ENCODE measurements at regions of chr10 and their contacts with region 1.

Region 1: DNA sequence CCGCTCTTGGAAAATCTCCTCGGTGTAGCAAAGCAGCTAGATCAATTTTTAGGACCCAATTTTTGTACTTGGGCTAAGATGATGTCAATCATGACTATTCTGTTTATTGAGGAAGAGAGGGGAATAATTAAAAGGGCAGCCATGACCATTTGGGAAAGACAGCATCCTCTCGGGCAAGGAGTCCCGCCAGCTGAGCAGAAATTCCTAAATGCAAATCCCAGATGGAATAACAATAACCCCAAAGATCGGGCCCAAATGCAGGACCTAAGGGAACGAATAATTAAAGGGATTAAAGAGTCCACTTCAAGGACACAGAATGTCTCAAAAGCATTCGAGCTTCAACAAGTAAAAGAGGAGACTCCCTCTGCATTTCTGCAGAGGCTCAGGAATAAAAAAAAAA is 18.7 kb downstream of the COL17A1 start:
- DNase-seq: no peak
- H3K4me3 ChIP-seq: no peak overlapping the region
- H3K27ac ChIP-seq: no peak overlapping the region
- H3K4me1 ChIP-seq: no peaks in the 10 kb centered on the region
- H3K27me3 ChIP-seq: no peaks in the 10 kb centered on the region
- CTCF ChIP-seq: no peak

Region 2: DNA sequence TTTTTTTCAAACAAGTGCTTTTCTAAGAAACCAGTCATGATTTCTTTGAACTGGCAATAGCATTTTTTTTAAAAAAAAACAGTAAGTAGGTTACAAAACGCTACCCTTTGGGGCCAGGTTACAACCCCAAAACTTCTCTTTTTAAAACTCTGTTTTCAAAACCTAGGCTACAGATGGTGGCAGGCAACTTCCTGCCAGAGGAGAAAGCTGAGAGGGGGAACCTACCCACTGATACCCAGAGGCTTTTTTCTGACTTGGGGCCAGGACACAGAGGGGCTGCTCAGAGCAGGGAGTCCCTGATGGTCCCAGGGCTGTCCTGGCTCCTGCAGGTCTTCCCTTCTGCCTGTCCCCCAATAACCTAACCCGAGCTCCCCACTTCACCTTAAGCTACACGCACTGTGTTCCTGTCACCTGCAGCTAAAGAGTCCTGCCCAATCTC is 155.9 kb before region 1 on chr10:
- CTCF ChIA-PET with region 1: interaction called, 16 read pairs
- POLR2A ChIA-PET with region 1: no interaction called
- intact Hi-C with region 1: no loop called
- DNase-seq: no peak
- H3K4me3 ChIP-seq: no peak overlapping the region
- H3K27ac ChIP-seq: 0 out of 2 replicates have a peak overlapping the region, but pooled peaks have one; percentile 73
- H3K4me1 ChIP-seq: peaks cover 48% of the 10 kb centered on the region
- H3K27me3 ChIP-seq: no peaks in the 10 kb centered on the region
- CTCF ChIP-seq: no peak

Region 3: GRCh38 chr10:103926722-103927319 is 140.1 kb before region 1 on chr10:
- CTCF ChIA-PET with region 1: no interaction called
- POLR2A ChIA-PET with region 1: no interaction called
- intact Hi-C with region 1: no loop called
- DNase-seq: no peak
- H3K4me3 ChIP-seq: no peak overlapping the region
- H3K27ac ChIP-seq: no peak overlapping the region
- H3K4me1 ChIP-seq: peaks cover 21% of the 10 kb centered on the region
- H3K27me3 ChIP-seq: no peaks in the 10 kb centered on the region
- CTCF ChIP-seq: no peak

Region 4: GRCh38 chr10:104032144-104032775 is 34.7 kb before region 1 on chr10:
- CTCF ChIA-PET with region 1: no interaction called
- POLR2A ChIA-PET with region 1: no interaction called
- intact Hi-C with region 1: no loop called
- DNase-seq: no peak
- H3K4me3 ChIP-seq: no peak overlapping the region
- H3K27ac ChIP-seq: no peak overlapping the region
- H3K4me1 ChIP-seq: no peaks in the 10 kb centered on the region
- H3K27me3 ChIP-seq: no peaks in the 10 kb centered on the region
- CTCF ChIP-seq: no peak

Region 5: GRCh38 chr10:104109908-104110662 is 43.1 kb after region 1 on chr10:
- CTCF ChIA-PET with region 1: no interaction called
- POLR2A ChIA-PET with region 1: no interaction called
- intact Hi-C with region 1: no loop called
- DNase-seq: peak in 1 of 2 experiments; percentile 79
- H3K4me3 ChIP-seq: no peak overlapping the region
- H3K27ac ChIP-seq: peak overlapping the region; percentile 52
- H3K4me1 ChIP-seq: peaks cover 14% of the 10 kb centered on the region
- H3K27me3 ChIP-seq: no peaks in the 10 kb centered on the region
- CTCF ChIP-seq: no peak

Measured in PC-9 (cell line).